ENCODE measurements at regions of chr15 and their contacts with region 1.

Region 1: GRCh38 chr15:101014921-101015841 is 96.0 kb downstream of the LRRK1 start:
- DNase-seq: peak; percentile 5
- ATAC-seq: peak; percentile 89
- H3K4me3 ChIP-seq: no peak overlapping the region
- H3K27ac ChIP-seq: no peak overlapping the region
- H3K4me1 ChIP-seq: no peaks in the 10 kb centered on the region
- H3K27me3 ChIP-seq: no peaks in the 10 kb centered on the region
- CTCF ChIP-seq: peak; percentile 82 to 88 (median 87)
- EP300 ChIP-seq: no peak
- POLR2A ChIP-seq: no peak
- RAD21 ChIP-seq: peak; percentile 87

Region 2: DNA sequence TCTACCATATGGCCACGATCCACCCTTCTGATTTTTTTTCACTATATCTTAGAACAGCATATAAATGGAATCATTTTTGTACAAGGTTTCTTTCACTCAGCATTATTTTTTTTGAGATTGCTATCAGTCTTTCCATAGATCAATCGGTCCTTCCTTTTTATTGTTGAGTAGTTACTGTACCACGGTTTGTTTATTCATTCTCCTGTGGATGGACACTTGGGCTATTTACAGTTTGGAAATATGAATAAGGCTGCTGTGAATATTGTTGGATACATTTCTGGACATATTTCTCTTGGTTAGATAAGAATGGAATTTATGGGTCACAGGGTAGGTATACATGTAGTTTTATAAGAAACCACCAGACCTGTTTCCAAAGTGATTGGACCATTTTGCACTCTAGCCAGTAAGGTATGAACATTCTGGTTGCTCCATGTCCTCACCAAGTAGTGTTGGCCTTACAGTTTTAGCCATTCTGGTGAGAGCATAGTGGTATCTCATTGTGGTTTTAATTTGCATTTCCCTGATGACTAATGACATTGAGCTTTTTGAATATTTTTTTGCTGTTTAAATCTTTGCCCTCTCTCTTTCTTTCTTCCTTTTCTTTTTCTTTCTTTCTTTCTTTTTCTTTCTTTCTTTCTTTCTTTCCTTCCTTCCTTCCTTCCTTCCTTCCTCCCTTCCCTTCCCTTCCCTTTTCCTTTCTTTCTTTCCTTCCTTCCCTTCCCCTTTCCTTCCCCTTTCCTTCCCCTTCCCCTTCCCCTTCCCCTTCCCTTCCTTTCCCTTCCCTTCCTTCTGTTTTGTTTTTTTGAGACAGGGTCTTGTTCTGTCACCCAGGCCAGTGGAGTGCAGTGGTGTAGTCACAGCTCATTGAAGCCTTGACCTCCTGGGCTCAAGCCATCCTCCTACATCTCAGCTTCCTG is 46.9 kb before region 1 on chr15:
- CTCF ChIA-PET with region 1: no interaction called
- POLR2A ChIA-PET with region 1: no interaction called
- RAD21 ChIA-PET with region 1: no interaction called
- SMC1A ChIA-PET with region 1: no interaction called
- in situ Hi-C with region 1: no loop called
- intact Hi-C with region 1: no loop called
- DNase-seq: peak; percentile 30
- ATAC-seq: peak; percentile 88
- H3K4me3 ChIP-seq: no peak overlapping the region
- H3K27ac ChIP-seq: no peak overlapping the region
- H3K4me1 ChIP-seq: peaks cover 7% of the 10 kb centered on the region
- H3K27me3 ChIP-seq: no peaks in the 10 kb centered on the region
- CTCF ChIP-seq: no peak
- EP300 ChIP-seq: no peak
- POLR2A ChIP-seq: no peak
- RAD21 ChIP-seq: no peak

Region 3: DNA sequence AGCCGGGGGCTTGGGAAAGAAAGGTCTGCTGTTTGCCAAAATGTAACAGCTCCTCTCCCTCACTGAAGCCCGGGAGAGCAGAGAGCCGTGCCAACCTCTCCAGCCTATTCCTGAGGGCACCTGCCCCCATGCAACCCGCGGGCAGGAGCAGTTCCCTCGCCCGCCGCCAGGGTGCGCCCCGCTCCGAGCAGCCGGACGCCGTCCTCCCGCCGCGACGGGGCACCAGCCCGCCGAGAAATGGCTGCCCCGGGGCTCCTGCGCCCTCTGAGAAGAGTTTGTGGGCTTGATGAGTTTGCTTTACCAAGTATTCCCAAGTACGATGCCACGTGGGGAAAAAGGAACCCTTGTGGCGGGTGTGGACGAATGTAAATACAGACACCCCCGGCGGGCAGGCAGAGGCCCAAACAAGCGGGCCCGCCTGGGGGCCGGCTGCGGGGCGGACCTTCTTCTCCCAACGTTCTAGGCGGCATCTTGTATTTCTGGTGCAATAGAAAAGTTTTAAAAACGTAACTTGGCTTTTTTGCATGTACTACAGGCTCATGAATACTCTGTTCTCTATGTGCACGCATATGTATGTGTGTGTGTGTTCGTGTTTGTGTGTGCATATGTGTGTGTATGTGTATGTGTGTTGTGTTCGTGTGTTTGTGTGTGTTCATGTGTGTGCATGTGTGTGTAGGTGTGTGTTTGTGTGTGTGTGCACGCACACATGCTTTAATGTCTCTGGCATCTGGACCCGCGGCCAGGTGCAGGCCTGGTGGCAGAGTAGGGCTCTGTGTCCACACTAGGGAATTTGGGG is 73.8 kb after region 1 on chr15:
- CTCF ChIA-PET with region 1: interaction called, 5 read pairs
- POLR2A ChIA-PET with region 1: no interaction called
- RAD21 ChIA-PET with region 1: no interaction called
- SMC1A ChIA-PET with region 1: no interaction called
- in situ Hi-C with region 1: no loop called
- intact Hi-C with region 1: loop called (anchors 5 kb)
- DNase-seq: no peak
- ATAC-seq: peak; percentile 98
- H3K4me3 ChIP-seq: no peak overlapping the region
- H3K27ac ChIP-seq: no peak overlapping the region
- H3K4me1 ChIP-seq: no peaks in the 10 kb centered on the region
- H3K27me3 ChIP-seq: no peaks in the 10 kb centered on the region
- CTCF ChIP-seq: peak; percentile 94 to 98 (median 97)
- EP300 ChIP-seq: no peak
- POLR2A ChIP-seq: no peak
- RAD21 ChIP-seq: peak; percentile 80